ENCODE measurements at regions of chr10 and their contacts with region 1.

Region 1: DNA sequence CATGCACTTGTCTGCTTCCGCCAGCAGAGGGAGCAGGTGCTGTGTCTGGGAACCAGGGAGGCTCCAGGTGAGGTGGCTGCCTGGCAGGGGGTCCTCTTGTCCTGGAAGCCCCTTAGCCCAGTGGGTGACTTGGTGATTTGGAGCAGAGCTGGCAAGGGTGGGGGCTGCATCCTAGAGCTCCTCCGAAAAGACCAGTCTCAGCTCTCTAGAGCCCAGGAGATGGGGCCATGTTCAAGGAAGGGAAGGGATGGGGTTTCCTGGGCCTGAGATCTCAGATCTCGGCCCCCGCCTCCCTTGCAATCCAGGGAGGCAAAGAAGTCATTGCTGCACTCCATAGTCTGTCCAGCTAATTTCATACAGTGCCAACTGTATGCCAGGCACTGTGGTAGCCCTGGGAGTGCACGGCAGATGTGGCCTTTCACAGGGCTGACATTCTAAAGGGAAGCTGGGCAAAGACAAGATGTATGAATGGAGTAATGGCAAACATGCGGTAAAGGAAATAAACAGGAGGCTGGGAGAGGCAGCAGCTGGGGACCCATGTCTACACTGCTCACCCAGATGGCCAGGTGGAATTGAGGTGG is 20.4 kb upstream of the SFRP5 start:
- DNase-seq: peak; percentile 42 to 85 (median 72)
- ATAC-seq: peak; percentile 77
- H3K4me3 ChIP-seq: no peak overlapping the region
- H3K4me3 Mint-ChIP-seq: no peak overlapping the region
- H3K27ac ChIP-seq: no peak overlapping the region
- H3K27ac Mint-ChIP-seq: no peak overlapping the region
- H3K4me1 ChIP-seq: peaks cover 47% of the 10 kb centered on the region
- H3K4me1 Mint-ChIP-seq: peaks cover 46% of the 10 kb centered on the region
- H3K27me3 ChIP-seq: no peaks in the 10 kb centered on the region
- H3K27me3 Mint-ChIP-seq: peaks cover 3% of the 10 kb centered on the region
- CTCF ChIP-seq: peak; percentile 77

Region 2: DNA sequence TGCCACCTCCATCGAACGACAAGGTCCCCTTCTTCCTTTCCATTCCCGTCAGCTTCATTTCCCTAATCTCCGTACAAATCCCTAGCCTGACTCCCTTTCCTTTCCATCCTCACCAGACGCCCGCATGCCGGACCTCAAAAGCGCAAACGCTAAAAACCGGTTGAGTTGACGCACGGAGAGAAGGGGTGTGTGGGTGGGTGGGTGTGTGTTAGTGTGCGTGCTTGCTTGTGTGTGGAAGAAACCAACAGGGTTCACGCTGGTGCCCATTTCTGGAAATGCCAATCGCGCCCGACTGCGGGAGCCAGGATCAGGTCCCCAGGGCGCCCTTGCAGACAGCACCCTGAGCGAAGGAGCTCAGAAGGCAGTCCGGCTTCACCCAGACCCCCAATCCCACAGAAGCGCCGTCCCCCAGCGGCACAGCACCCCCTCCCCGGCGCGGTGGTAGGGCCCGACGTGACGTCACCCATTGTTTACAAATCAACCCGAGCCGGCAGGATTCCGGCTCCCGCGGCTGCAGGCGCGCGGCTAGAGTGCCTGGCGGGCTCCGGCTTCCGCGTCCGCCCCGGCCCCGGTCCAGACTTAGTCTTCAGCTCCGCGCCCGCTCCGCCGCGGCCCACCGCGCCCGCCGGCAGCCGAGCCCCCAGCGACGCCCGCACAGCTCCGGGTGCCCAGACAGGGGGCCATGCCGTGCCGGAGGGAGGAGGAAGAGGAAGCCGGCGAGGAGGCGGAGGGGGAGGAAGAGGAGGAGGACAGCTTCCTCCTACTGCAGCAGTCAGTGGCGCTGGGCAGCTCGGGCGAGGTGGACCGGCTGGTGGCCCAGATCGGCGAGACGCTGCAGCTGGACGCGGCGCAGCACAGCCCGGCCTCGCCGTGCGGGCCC is 473.2 kb before region 1 on chr10 and contains the start of gene FRAT1:
- CTCF ChIA-PET with region 1: no interaction called
- POLR2A ChIA-PET with region 1: no interaction called
- intact Hi-C with region 1: no loop called
- DNase-seq: peak; percentile 86 to 97 (median 92)
- ATAC-seq: peak; percentile 76
- H3K4me3 ChIP-seq: peak within 1 kb of the TSS; percentile 76 to 79
- H3K4me3 Mint-ChIP-seq: peak within 1 kb of the TSS; percentile 99
- H3K27ac ChIP-seq: peak within 1 kb of the TSS; percentile 100
- H3K27ac Mint-ChIP-seq: peak within 1 kb of the TSS; percentile 100
- H3K4me1 ChIP-seq: peaks cover 24% of the 10 kb centered on the region
- H3K4me1 Mint-ChIP-seq: peaks cover 29% of the 10 kb centered on the region
- H3K27me3 ChIP-seq: no peaks in the 10 kb centered on the region
- H3K27me3 Mint-ChIP-seq: no peaks in the 10 kb centered on the region
- CTCF ChIP-seq: no peak
- total RNA-seq, gene FRAT1: 39.6 to 40.2 TPM

Region 3: GRCh38 chr10:97759158-97759887 is 32.9 kb before region 1 on chr10:
- CTCF ChIA-PET with region 1: interaction called, 42 read pairs
- POLR2A ChIA-PET with region 1: no interaction called
- intact Hi-C with region 1: no loop called
- DNase-seq: peak in 8 of 9 experiments; percentile 27 to 76 (median 58)
- ATAC-seq: peak; percentile 71
- H3K4me3 ChIP-seq: no peak overlapping the region
- H3K4me3 Mint-ChIP-seq: no peak overlapping the region
- H3K27ac ChIP-seq: no peak overlapping the region
- H3K27ac Mint-ChIP-seq: no peak overlapping the region
- H3K4me1 ChIP-seq: peaks cover 7% of the 10 kb centered on the region
- H3K4me1 Mint-ChIP-seq: peaks cover 3% of the 10 kb centered on the region
- H3K27me3 ChIP-seq: no peaks in the 10 kb centered on the region
- H3K27me3 Mint-ChIP-seq: no peaks in the 10 kb centered on the region
- CTCF ChIP-seq: peak; percentile 50

Region 4: GRCh38 chr10:97780841-97781617 is 11.2 kb before region 1 on chr10:
- CTCF ChIA-PET with region 1: interaction called, 36 read pairs
- POLR2A ChIA-PET with region 1: interaction called, 3 read pairs
- intact Hi-C with region 1: no loop called
- DNase-seq: peak in 1 of 9 experiments; percentile 18
- ATAC-seq: no peak
- H3K4me3 ChIP-seq: peak overlapping the region in 1 of 2 experiments; percentile 36
- H3K4me3 Mint-ChIP-seq: peak overlapping the region; percentile 32
- H3K27ac ChIP-seq: peak overlapping the region; percentile 54 to 73
- H3K27ac Mint-ChIP-seq: peak overlapping the region; percentile 93
- H3K4me1 ChIP-seq: peaks cover 42% of the 10 kb centered on the region
- H3K4me1 Mint-ChIP-seq: peaks cover 43% of the 10 kb centered on the region
- H3K27me3 ChIP-seq: no peaks in the 10 kb centered on the region
- H3K27me3 Mint-ChIP-seq: no peaks in the 10 kb centered on the region
- CTCF ChIP-seq: no peak

Region 5: DNA sequence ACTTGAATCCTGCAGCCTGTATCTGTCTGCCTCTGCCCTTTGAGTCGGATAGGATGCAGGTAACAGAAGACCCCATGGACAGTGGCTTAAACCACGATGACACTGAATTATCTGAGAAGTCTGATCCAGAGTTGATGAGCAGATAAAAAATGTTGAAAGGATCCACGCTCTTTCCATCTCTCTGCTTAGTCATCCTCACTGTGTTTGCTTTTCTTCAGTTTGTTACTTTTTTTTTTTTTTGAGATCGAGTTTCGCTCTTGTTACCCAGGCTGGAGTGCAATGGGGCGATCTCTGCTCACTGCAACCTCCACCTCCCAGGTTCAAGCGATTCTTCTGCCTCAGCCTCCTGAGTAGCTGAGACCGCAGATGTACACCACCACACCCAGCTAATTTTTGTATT is 20.5 kb after region 1 on chr10:
- CTCF ChIA-PET with region 1: interaction called, 20 read pairs
- POLR2A ChIA-PET with region 1: no interaction called
- intact Hi-C with region 1: no loop called
- DNase-seq: no peak
- ATAC-seq: no peak
- H3K4me3 ChIP-seq: no peak overlapping the region
- H3K4me3 Mint-ChIP-seq: no peak overlapping the region
- H3K27ac ChIP-seq: no peak overlapping the region
- H3K27ac Mint-ChIP-seq: no peak overlapping the region
- H3K4me1 ChIP-seq: no peaks in the 10 kb centered on the region
- H3K4me1 Mint-ChIP-seq: peaks cover 15% of the 10 kb centered on the region
- H3K27me3 ChIP-seq: no peaks in the 10 kb centered on the region
- H3K27me3 Mint-ChIP-seq: peaks cover 2% of the 10 kb centered on the region
- CTCF ChIP-seq: no peak

Region 6: DNA sequence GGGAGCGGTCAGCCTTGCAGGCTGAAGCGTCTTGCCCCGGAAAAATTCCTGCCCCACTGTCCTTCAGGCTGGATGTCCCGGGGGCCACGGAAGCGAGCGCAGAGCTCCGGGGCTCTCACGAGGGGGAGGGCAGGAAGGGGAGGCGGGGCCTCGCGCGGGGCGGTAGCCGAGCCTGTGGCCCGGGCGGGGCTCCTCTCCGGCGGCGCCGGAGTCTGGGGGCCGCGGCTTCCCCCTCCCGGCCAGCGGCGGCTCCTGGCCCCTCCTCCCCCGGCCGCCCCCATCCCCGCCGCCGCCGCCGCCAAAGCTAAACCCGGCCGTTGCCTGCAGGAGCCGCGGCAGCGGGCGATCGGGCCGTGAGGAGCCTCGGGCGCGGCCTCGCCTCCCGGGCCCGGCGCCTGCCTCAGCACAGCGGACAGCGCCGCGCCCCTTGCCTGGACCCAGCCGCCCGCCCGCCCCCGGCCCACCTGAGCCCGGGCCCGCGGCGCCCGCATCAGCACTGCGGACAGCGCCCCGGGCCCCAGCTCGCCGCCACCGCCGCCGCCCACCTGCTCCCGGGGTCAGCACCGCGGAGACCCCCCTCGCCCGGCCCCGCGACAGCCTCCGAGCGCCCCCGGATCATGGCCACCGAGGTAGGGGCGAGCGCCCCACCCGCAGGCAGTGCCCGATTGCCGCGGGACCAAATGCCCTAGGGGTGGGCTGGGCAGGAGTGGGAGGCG is 57.6 kb after region 1 on chr10 and contains the start of gene GOLGA7B:
- CTCF ChIA-PET with region 1: interaction called, 19 read pairs
- POLR2A ChIA-PET with region 1: interaction called, 3 read pairs
- intact Hi-C with region 1: loop called in 1 of 2 experiments (anchors 5 kb)
- DNase-seq: peak; percentile 23 to 80 (median 69)
- ATAC-seq: peak; percentile 84
- H3K4me3 ChIP-seq: peak within 1 kb of the TSS; percentile 70 to 87
- H3K4me3 Mint-ChIP-seq: peak within 1 kb of the TSS; percentile 84
- H3K27ac ChIP-seq: peak within 1 kb of the TSS in 1 of 2 experiments; percentile 22
- H3K27ac Mint-ChIP-seq: peak within 1 kb of the TSS; percentile 84
- H3K4me1 ChIP-seq: peaks cover 31% of the 10 kb centered on the region
- H3K4me1 Mint-ChIP-seq: peaks cover 39% of the 10 kb centered on the region
- H3K27me3 ChIP-seq: no peaks in the 10 kb centered on the region
- H3K27me3 Mint-ChIP-seq: no peaks in the 10 kb centered on the region
- CTCF ChIP-seq: no peak
- total RNA-seq, gene GOLGA7B: 3.5 to 5.1 TPM